ENCODE measurements at regions of chrX and their contacts with region 1.

Region 1: GRCh38 chrX:44872817-44873414 is at the start of gene KDM6A:
- DNase-seq: peak; percentile 95
- ATAC-seq: peak; percentile 88
- H3K4me3 ChIP-seq: peak within 1 kb of the TSS; percentile 99
- H3K27ac ChIP-seq: peak within 1 kb of the TSS; percentile 82
- H3K4me1 ChIP-seq: peaks cover 8% of the 10 kb centered on the region; the same call in 1 of the 2 replicates
- H3K27me3 ChIP-seq: no peaks in the 10 kb centered on the region
- CTCF ChIP-seq: no peak
- total RNA-seq, gene KDM6A: 27.2 and 31.3 TPM in 2 replicates

Region 2: GRCh38 chrX:44542567-44543325 is 330.2 kb before region 1 on chrX and contains the start of gene FUNDC1:
- CTCF ChIA-PET with region 1: no interaction called
- POLR2A ChIA-PET with region 1: no interaction called
- intact Hi-C with region 1: loop called (anchors 5 kb)
- DNase-seq: peak; percentile 96
- ATAC-seq: peak; percentile 94
- H3K4me3 ChIP-seq: peak within 1 kb of the TSS; percentile 83
- H3K27ac ChIP-seq: peak within 1 kb of the TSS; percentile 29; the same call in 1 of the 2 replicates
- H3K4me1 ChIP-seq: 0 out of 2 replicates have a peak, but pooled peaks cover 13% of the 10 kb centered on the region
- H3K27me3 ChIP-seq: no peaks in the 10 kb centered on the region
- CTCF ChIP-seq: peak; percentile 58
- total RNA-seq, gene FUNDC1: 21.8 and 28.0 TPM in 2 replicates

Region 3: DNA sequence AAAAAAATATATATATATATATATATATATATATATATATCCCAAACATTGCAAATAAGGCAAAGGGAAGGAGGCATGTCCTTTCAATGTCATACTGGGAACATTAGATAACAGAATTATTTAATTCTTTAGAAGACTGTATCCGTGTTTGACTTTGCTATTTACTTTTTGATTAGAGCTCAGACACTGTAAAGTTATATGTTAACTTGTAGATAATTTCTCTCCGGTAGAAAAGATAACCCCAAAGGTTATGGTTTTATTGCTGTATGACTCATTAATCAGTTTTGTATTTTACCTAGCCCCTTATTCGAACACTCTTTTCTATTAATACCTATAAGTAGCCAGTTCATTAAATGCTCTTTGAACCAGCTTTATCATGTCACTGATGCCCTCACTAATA is 179.7 kb before region 1 on chrX:
- CTCF ChIA-PET with region 1: no interaction called
- POLR2A ChIA-PET with region 1: no interaction called
- intact Hi-C with region 1: loop called (anchors 5 kb)
- DNase-seq: no peak
- ATAC-seq: no peak
- H3K4me3 ChIP-seq: no peak overlapping the region
- H3K27ac ChIP-seq: no peak overlapping the region
- H3K4me1 ChIP-seq: no peaks in the 10 kb centered on the region
- H3K27me3 ChIP-seq: no peaks in the 10 kb centered on the region
- CTCF ChIP-seq: no peak

Region 4: DNA sequence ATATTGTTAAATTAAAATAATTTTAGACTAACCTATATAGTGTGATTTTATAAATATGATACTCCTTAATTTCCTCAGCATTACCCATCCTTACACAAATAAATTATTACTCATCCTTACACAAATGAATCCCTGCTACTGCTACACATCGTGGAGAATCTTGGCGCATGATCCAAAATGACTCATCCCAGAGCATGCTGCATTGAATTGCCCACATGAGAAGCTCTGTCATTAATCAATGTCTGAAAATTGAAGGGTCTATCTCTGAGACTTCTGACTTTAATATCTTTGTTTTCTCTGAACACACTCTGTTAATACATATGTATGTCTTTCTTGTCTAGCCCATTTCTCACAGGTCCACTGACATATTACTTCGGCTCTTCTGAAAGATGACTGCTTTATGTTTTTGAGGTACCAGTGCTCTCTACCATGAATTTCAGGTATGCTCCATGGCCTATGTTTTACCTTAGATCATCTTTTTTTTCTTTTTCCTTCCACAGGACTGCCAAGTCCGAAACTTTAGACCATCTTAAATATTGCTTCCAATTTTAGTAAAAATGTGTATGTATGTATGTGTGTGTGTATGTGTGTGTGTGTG is 44.8 kb before region 1 on chrX:
- CTCF ChIA-PET with region 1: no interaction called
- POLR2A ChIA-PET with region 1: no interaction called
- intact Hi-C with region 1: loop called (anchors 1 kb)
- DNase-seq: peak; percentile 94
- ATAC-seq: peak; percentile 99
- H3K4me3 ChIP-seq: no peak overlapping the region
- H3K27ac ChIP-seq: peak overlapping the region; percentile 53
- H3K4me1 ChIP-seq: peaks cover 12% of the 10 kb centered on the region
- H3K27me3 ChIP-seq: no peaks in the 10 kb centered on the region
- CTCF ChIP-seq: no peak

Region 5: GRCh38 chrX:44945736-44946135 is 72.8 kb after region 1 on chrX:
- CTCF ChIA-PET with region 1: no interaction called
- POLR2A ChIA-PET with region 1: no interaction called
- intact Hi-C with region 1: loop called (anchors 5 kb)
- DNase-seq: peak; percentile 67
- ATAC-seq: peak; percentile 55
- H3K4me3 ChIP-seq: no peak overlapping the region
- H3K27ac ChIP-seq: no peak overlapping the region
- H3K4me1 ChIP-seq: peaks cover 31% of the 10 kb centered on the region
- H3K27me3 ChIP-seq: no peaks in the 10 kb centered on the region
- CTCF ChIP-seq: peak; percentile 73

Measured in PC-3 (cell line).